ENCODE measurements at regions of chr10 and their contacts with region 1.

Region 1: GRCh38 chr10:118692872-118693271 is 61.9 kb downstream of the CACUL1 start:
- DNase-seq: no peak
- ATAC-seq: no peak
- H3K4me3 Mint-ChIP-seq: no peak overlapping the region
- H3K27ac Mint-ChIP-seq: no peak overlapping the region
- H3K4me1 Mint-ChIP-seq: peaks cover 25% of the 10 kb centered on the region
- H3K27me3 Mint-ChIP-seq: no peaks in the 10 kb centered on the region

Region 2: GRCh38 chr10:118682533-118682932 is 10.3 kb before region 1 on chr10:
- CTCF ChIA-PET with region 1: interaction called, 10 read pairs
- POLR2A ChIA-PET with region 1: interaction called, 3 read pairs
- intact Hi-C with region 1: no loop called
- DNase-seq: no peak
- ATAC-seq: no peak
- H3K4me3 Mint-ChIP-seq: no peak overlapping the region
- H3K27ac Mint-ChIP-seq: no peak overlapping the region
- H3K4me1 Mint-ChIP-seq: peaks cover 7% of the 10 kb centered on the region
- H3K27me3 Mint-ChIP-seq: no peaks in the 10 kb centered on the region